IMR-90 (cell line): ENCODE measurements at regions of chr9 and their contacts with region 1.

Region 1: DNA sequence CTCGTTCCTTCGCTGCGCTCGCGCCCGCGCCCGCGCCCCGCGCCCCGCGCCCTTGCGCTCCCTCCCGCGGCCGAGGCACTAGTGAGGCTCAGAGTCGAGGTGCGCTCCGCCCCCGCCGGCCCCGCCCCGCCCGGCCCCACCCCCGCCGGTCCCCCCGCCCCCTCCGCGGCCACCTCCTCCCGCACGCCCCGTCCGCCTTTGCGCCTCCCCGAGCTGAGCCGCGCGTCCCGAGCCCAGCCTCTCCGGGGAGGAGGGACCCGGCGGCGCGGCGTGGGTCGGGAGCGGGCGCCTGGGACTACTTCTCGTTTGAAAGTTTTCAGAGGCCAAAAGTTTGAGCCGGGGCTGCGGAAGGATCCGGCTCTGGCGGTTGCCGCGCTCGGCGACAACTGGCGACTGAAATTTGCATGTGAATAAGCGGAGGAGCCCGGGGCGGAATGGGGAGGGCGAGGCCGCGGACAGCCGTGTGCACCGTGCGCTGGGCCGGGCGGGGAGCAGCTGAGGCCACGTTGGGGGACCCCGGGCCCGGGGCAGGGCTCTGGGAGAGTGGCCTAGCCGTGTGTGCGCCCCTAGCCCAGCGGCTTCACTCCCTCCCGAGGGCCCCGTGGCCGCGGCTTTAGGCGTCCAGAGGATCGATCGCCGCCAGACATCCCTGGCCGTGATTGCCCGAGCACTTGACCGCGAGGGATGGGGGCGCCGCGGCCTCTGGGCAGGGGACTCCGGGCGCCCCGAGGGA is at the start of gene NOTCH1:
- DNase-seq: peak; percentile 87
- ATAC-seq: peak; percentile 85
- H3K4me3 ChIP-seq: peak within 1 kb of the TSS; percentile 82
- H3K27ac ChIP-seq: peak within 1 kb of the TSS; percentile 76
- H3K4me1 ChIP-seq: peaks cover 30% of the 10 kb centered on the region
- H3K27me3 ChIP-seq: no peaks in the 10 kb centered on the region
- CTCF ChIP-seq: no peak
- POLR2A ChIP-seq: no peak
- RAD21 ChIP-seq: no peak
- total RNA-seq, gene NOTCH1: 1.8 and 2.5 TPM in 2 replicates

Region 2: DNA sequence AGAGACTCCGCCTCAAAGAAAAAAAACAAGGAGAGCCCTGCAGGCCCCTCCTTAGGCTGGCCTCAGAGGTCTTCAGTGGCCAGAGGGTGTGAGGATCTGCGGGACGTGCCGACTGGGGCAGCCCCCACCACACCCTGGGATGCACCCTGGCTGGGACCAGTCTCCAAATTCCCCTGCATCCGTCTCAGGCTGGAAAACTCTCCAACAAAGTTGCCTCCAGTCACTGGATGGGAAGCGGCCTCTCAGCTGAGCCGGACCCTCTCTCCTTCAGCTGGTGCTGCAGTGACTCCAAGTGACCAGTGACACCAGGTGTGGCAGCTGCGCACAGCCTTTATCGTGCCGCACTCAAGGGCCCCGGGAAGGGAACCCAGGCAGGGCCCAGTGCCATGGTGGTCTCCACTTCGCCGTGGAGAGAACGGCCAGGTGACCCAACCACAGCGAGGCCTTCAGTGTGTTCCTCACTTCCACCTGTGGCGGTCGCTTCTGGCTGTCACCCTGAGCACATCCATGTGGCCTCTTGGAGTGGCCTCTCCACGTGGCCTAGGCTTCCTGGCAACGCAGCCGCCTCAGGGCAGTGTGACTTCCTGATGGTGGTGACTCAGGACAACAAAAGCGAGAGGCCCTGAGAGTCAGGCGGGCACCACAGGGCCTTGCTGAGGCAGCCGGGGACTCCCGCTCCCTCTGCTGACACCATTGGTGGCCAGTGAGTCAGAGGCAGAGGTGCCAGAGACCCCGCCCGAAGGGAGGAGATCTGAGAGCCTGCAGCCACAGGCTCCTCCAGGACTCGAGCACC is 619.5 kb before region 1 on chr9:
- CTCF ChIA-PET with region 1: no interaction called
- POLR2A ChIA-PET with region 1: no interaction called
- dilution Hi-C with region 1: no loop called
- in situ Hi-C with region 1: no loop called
- intact Hi-C with region 1: no loop called
- DNase-seq: peak; percentile 61
- ATAC-seq: peak; percentile 58
- H3K4me3 ChIP-seq: no peak overlapping the region
- H3K27ac ChIP-seq: no peak overlapping the region
- H3K4me1 ChIP-seq: no peaks in the 10 kb centered on the region
- H3K27me3 ChIP-seq: no peaks in the 10 kb centered on the region
- CTCF ChIP-seq: no peak
- POLR2A ChIP-seq: no peak
- RAD21 ChIP-seq: no peak

Region 3: GRCh38 chr9:136567651-136568287 is 21.6 kb after region 1 on chr9:
- CTCF ChIA-PET with region 1: no interaction called
- POLR2A ChIA-PET with region 1: no interaction called
- dilution Hi-C with region 1: no loop called
- in situ Hi-C with region 1: no loop called
- intact Hi-C with region 1: loop called (anchors 1 kb)
- DNase-seq: peak; percentile 81
- ATAC-seq: peak; percentile 86
- H3K4me3 ChIP-seq: no peak overlapping the region
- H3K27ac ChIP-seq: peak overlapping the region; percentile 42
- H3K4me1 ChIP-seq: peaks cover 38% of the 10 kb centered on the region
- H3K27me3 ChIP-seq: no peaks in the 10 kb centered on the region
- CTCF ChIP-seq: no peak
- POLR2A ChIP-seq: no peak
- RAD21 ChIP-seq: no peak

Region 4: DNA sequence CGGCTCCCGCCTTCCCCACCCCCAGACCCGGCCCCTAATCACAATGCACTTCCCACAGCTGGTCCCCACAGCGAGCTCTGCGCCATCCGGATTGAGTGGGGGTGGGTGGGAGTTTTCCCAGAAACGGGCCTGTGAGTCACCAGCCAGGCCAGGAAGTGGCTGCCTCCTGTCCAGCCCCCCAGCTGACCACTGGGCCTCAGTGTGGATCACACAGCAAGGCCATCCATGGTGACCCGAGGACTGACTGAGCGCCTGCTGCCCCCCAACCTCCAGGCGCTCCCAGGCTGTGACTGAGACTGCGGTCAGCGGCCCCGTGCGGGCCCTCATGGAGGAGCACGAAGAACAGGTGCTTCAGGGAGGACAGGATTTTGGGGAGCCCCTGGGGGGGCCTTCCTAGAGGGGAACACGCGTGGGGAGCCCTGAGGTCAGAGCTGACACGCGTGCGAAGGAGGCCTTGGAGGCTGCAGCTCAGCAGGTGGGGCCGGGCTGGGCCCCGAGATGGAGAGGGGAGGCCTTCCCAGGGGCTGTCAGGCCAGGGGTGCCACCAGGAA is 68.3 kb after region 1 on chr9:
- CTCF ChIA-PET with region 1: no interaction called
- POLR2A ChIA-PET with region 1: no interaction called
- dilution Hi-C with region 1: no loop called
- in situ Hi-C with region 1: no loop called
- intact Hi-C with region 1: loop called (anchors 2 kb)
- DNase-seq: peak; percentile 89
- ATAC-seq: peak; percentile 94
- H3K4me3 ChIP-seq: no peak overlapping the region
- H3K27ac ChIP-seq: peak overlapping the region; percentile 32
- H3K4me1 ChIP-seq: peaks cover 18% of the 10 kb centered on the region
- H3K27me3 ChIP-seq: no peaks in the 10 kb centered on the region; the same call in 1 of the 2 replicates
- CTCF ChIP-seq: no peak
- POLR2A ChIP-seq: no peak
- RAD21 ChIP-seq: no peak; the same call in 1 of the 2 replicates

Region 5: GRCh38 chr9:136625101-136626060 is 79.2 kb after region 1 on chr9:
- CTCF ChIA-PET with region 1: interaction called, 3 read pairs
- POLR2A ChIA-PET with region 1: no interaction called
- dilution Hi-C with region 1: no loop called
- in situ Hi-C with region 1: no loop called
- intact Hi-C with region 1: loop called (anchors 2 kb)
- DNase-seq: peak; percentile 31
- ATAC-seq: peak; percentile 73
- H3K4me3 ChIP-seq: no peak overlapping the region
- H3K27ac ChIP-seq: no peak overlapping the region
- H3K4me1 ChIP-seq: peaks cover 7% of the 10 kb centered on the region; the same call in 1 of the 2 replicates
- H3K27me3 ChIP-seq: no peaks in the 10 kb centered on the region; the same call in 1 of the 2 replicates
- CTCF ChIP-seq: peak; percentile 59
- POLR2A ChIP-seq: no peak
- RAD21 ChIP-seq: peak; percentile 75

Region 6: DNA sequence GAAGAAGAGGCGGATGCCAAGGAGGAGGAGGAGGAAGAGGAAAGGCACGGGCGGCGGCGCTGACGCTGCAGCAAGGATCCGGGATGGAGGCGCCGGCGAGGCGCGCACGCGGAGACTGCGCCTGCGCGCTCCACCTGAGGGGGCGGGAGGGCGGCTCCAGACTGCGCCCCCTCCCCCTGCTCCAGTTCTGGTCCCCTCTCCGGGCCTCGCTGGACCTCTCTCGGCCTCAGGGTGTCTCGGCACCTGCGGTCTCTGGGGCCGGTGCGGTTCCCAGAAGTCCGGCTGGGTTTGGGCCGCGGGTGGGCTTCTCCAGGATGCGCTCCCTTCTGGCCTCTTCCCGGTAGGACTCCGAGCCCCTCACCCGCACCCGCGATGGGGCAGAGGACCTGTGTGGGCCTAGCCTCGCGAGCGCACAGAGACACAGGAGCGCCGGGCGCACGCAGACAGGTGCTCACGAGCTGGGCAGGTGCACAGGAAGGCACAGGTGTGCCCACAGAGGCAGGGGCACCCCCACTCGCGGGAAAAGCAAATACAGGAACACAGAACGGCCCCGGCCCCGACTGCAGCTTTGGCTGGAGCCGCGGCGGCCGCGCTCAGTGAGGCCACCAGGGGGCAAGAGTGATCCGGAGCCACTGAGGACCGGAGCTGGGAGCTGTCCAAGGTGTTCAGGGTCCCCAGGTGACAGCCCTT is 500.1 kb after region 1 on chr9 and contains the start of gene NPDC1:
- CTCF ChIA-PET with region 1: no interaction called
- POLR2A ChIA-PET with region 1: no interaction called
- dilution Hi-C with region 1: no loop called
- in situ Hi-C with region 1: no loop called
- intact Hi-C with region 1: no loop called
- DNase-seq: peak; percentile 61
- ATAC-seq: peak; percentile 76
- H3K4me3 ChIP-seq: peak within 1 kb of the TSS; percentile 63
- H3K27ac ChIP-seq: no peak within 1 kb of the TSS; the same call in 1 of the 2 replicates
- H3K4me1 ChIP-seq: peaks cover 11% of the 10 kb centered on the region
- H3K27me3 ChIP-seq: peaks cover 32% of the 10 kb centered on the region
- CTCF ChIP-seq: peak; percentile 89
- POLR2A ChIP-seq: no peak
- RAD21 ChIP-seq: peak; percentile 74
- total RNA-seq, gene NPDC1: 2.7 and 2.8 TPM in 2 replicates